ENCODE measurements at regions of chr6 and their contacts with region 1.

Region 1: DNA sequence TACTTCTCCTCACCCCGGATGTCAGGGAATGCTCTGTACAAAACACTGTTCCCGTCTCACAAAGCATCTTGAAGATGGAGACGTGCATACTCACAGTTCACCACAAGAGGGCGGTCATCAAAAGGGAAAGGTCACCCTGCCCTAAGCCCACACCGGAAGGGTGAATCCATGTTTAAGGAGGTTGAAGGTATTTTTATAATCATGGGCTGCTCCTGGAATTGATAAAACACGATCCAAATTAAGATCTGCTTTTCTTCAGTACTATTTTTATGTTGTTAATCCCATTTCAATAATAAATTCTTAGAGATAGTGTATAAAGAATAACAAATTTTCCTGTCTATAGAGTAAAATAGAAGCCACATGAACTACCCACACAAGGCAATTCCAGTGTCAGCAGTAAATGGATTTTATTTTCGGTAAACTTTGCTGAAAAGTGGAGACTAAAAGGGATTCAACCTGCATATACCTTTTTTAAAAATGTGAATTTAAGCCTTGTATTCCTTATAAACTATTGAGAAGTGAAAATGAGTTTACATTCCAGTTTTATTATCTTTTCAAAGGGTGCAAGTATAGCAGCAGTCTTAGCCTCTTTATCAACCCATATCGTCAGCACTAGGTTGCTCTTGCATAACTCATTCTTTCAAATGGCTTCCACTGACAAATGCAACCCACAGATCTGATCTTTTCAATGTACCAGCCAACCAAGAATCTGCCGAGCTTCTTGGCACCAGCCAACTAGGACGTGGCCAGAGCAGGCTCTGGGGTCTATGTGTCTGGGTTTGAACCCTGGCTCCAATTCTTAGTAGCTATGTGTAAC is 79.7 kb upstream of the MBOAT1 start:
- DNase-seq: peak; percentile 59 to 74 (median 60)
- ATAC-seq: peak; percentile 98 to 100 (median 99)
- H3K4me3 ChIP-seq: no peak overlapping the region
- H3K27ac ChIP-seq: no peak overlapping the region
- H3K4me1 ChIP-seq: no peaks in the 10 kb centered on the region
- H3K27me3 ChIP-seq: no peaks in the 10 kb centered on the region
- CTCF ChIP-seq: peak; percentile 86 to 96 (median 92)
- POLR2A ChIP-seq: no peak

Region 2: DNA sequence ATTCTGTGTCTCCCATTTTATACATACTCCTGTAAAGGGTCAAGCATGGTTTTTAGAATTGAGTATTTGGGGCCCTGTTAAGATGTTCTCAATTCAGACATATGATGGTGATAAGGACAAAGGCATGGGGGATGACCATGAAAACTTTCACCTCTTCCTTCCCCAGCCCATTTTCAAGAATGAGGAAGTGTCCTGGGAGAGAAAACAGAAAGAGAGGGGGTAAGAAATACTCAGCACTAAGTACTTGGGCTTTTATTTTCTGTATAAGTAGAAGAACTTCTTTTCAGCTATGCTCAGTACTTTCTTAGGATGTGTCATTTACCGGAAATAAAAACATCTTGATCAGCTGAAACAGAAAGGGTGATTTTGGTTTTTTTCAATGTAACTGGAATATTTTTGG is 68.8 kb before region 1 on chr6:
- intact Hi-C with region 1: no loop called
- DNase-seq: no peak
- ATAC-seq: peak in 2 of 4 donors; percentile 24 to 48
- H3K4me3 ChIP-seq: no peak overlapping the region
- H3K27ac ChIP-seq: no peak overlapping the region
- H3K4me1 ChIP-seq: no peaks in the 10 kb centered on the region
- H3K27me3 ChIP-seq: no peaks in the 10 kb centered on the region
- CTCF ChIP-seq: no peak
- POLR2A ChIP-seq: no peak

Region 3: GRCh38 chr6:20236909-20237600 is 54.9 kb before region 1 on chr6:
- intact Hi-C with region 1: no loop called
- DNase-seq: no peak
- ATAC-seq: peak in 2 of 4 donors; percentile 38 to 40
- H3K4me3 ChIP-seq: no peak overlapping the region
- H3K27ac ChIP-seq: no peak overlapping the region
- H3K4me1 ChIP-seq: peaks cover 0 to 7% (median 0%) of the 10 kb centered on the region in 4 donors
- H3K27me3 ChIP-seq: no peaks in the 10 kb centered on the region
- CTCF ChIP-seq: no peak
- POLR2A ChIP-seq: no peak

Region 4: DNA sequence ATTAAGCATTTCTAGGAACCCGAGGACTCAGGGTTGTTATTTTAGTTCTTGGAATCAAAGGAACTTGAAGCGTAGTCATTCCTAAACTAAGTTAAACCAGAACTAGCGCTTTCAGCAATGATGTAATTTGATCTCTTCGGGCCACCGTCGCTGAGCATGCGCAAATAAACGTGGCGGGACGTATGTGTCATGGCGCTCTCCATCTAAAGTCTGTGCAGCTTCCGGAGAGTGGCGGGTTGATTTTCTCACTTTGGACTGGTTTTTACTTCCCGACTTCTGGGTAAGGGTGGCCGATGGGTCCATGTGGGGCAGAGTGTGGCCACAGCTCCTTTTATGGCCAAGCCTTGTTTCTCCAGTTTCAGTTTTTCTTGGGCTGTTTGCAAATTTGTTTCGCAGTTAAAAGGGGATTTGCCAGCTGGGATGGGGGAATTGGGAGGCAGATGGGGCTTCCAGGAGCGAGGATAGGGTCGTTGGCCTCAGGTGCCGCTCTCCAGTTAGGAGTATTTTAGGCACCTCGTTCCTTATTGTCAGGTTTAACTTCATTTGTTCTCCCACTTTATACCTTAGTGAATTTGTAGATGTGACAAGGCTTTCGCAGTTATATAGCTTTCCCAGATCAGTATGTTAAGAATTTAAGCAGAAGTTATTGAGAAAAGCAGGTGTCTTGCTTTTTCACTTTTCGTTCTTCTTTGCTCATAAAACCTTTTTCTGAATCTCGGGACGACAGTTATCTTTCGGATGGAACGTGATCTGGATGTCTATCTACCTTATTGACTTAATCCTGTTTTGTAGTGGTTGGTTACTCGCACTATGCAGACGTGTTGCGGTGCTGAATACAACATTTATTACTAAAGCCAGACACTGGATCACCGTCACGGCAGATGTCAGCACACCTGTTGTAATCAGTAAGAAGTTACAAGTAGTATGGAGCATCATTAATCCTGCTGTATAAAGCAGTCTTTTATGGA is 242.6 kb after region 1 on chr6 and contains the start of gene CDKAL1:
- intact Hi-C with region 1: loop called (anchors 5 to 10 kb)
- DNase-seq: peak; percentile 82 to 91 (median 89)
- ATAC-seq: peak; percentile 93 to 99 (median 98)
- H3K4me3 ChIP-seq: peak within 1 kb of the TSS; percentile 68 to 74 (median 68)
- H3K27ac ChIP-seq: peak within 1 kb of the TSS; percentile 49 to 54 (median 52)
- H3K4me1 ChIP-seq: peaks cover 0 to 10% (median 3%) of the 10 kb centered on the region in 4 donors
- H3K27me3 ChIP-seq: no peaks in the 10 kb centered on the region
- CTCF ChIP-seq: no peak
- POLR2A ChIP-seq: peak; percentile 75
- total RNA-seq, gene CDKAL1: 4.5 to 7.0 (median 6.2) TPM